ENCODE measurements at regions of chr18 and their contacts with region 1.

Region 1: DNA sequence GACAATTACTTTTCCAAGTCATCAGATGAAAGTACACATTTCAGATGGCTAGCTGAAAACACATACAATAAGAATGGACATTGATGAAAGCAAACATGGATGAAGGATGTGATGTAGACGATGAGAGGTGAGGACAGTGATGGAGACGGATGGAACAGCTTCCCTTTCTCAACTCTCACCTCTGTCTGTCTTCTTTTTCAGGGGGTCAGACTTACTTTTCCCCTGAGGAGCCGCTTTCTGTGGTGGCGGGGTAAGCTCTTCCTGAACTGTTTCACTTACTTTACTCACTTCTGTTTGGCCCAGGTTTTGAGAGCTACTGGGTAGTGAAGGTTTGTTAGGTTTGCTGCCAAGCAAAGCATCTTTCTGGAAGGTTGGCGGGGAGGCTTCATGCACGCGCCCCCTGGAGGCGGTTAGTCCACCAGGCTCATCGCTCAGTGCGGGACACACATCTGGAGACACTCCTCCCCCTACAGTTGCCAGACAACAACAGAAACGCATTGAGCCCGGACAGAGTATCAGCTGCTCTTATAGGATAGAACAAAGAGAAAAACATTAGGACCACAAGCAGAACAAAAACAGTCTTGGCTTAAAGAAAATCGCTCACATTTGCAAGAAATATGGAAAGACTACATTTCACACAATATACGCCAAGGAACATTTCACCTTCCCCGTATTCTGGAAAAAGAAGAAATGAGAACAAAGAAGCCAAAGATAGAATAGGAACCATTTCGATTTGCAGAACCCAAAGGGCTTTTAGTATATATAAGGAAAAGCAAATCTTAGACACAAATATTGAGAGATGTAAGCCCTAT is 90.5 kb downstream of the MYOM1 start:
- H3K4me3 ChIP-seq: no peak overlapping the region
- H3K27ac ChIP-seq: no peak overlapping the region
- H3K4me1 ChIP-seq: no peaks in the 10 kb centered on the region
- CTCF ChIP-seq: peak; percentile 88

Region 2: DNA sequence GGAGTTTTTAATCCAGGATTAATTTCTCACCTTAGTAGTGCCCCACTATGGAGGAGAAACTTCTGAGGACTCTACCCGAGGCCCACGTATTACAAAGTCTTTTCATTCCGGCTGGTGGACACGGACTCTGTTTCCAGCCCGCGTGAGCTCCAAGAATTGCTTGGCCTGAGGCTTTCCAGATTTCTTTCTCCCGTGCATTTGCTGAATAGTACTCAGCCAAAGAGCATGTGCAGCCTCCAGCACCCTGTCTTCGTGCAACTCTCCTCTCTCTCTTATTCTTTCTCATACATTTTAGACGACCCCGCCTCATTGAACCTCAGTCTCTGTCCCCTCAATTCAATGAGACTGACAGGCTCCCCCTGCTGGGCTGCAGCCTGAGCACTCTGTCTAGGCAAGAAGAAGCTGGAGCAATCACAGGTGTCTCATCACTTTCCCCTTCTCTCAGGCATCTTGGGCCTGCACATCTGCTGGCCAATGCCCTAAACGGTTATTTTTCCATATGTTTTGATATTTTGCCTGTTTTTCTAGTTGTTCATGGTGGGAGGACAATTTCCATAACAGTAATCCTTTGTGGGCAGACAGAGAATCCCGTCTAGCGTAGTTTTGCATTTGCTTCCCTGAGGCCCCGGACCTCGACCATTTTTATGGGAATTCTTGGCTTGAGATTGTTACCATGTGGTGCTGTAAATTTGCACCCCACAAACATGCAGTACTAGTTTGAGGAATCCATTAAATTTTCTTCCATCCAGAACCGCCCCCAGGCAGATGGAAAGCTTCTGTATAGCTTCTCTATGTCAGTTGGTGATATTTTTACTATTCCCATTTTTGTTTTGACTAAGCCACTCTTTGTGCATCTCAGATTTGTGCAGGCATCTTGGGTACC is 66.2 kb before region 1 on chr18:
- CTCF ChIA-PET with region 1: interaction called, 18 read pairs
- POLR2A ChIA-PET with region 1: no interaction called
- H3K4me3 ChIP-seq: no peak overlapping the region
- H3K27ac ChIP-seq: no peak overlapping the region
- H3K4me1 ChIP-seq: no peaks in the 10 kb centered on the region
- CTCF ChIP-seq: peak; percentile 61; the same call in 1 of the 2 replicates

Region 3: DNA sequence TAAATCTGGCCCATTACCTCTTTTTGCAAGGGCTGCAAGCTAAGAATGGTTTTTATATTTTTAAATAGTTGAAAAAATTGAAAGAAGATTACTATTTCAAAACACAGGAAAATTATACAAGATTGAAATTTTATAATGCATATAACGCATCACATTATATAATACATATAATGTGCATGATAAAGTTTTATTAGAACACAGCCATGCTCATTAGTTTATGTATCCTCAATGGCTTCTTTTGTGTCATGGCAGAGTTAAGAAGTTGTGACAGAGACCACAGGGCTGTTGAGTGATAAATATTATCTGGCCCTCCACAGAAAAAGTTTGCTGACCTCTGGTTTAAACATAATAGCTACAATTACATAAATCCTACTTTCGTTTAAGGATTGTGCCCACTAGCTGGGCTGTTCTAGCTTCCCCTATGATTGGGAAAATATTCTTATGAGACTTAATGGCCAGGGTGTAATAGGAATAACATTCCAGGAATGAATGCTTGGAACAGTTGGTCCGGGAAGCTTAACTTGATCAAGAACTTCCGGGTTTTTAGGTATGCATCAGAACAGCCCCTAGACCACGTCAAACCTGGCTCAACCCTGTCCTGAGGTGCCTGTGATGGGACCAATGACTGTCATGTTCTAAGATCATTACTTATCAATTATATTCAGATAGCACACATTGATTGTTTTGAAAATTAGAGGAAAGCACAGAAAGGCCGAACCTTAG is 17.6 kb before region 1 on chr18:
- CTCF ChIA-PET with region 1: interaction called, 38 read pairs
- POLR2A ChIA-PET with region 1: no interaction called
- H3K4me3 ChIP-seq: no peak overlapping the region
- H3K27ac ChIP-seq: no peak overlapping the region
- H3K4me1 ChIP-seq: peaks cover 5% of the 10 kb centered on the region; the same call in 1 of the 2 replicates
- CTCF ChIP-seq: no peak

Region 4: DNA sequence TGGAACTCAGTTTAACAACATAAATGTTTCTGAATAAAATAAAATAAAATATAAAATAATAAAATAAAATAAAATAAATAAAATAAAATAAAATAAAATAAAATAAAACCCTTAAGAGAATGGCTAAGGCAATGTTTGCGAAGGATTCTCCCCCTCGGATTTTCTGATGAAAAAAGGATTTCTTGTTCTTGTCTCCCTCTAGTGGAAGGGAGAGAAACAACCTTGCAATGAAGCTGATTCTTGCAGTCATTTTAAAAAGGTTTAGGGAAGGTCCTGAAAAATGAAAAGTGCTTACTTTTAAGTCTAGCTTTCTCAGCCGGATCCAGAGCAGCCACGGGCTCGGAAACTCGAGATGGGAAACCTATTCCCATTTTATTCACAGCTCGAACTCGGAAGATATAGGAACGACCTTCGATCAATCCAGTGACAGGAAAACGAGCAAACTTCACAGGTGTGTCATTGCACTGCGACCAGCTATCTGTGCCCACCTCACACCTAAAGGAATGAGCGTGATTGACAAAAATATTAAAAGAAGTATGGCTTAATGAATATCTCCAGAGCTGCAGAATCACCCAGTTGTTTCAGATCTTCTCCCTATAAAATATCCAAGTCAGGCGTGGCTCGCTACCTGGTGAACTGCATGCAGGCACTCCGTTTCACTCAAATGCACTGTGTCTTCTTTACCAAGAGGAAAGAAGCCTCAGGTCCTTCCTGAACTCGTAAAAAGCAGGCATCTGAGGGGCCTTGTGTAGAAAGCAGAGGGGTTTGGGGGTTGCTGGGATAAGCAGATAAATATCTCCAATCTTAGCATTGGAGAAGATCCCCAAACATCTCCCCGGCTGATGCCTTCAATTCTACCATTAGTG is 22.4 kb after region 1 on chr18:
- CTCF ChIA-PET with region 1: interaction called, 13 read pairs
- POLR2A ChIA-PET with region 1: no interaction called
- H3K4me3 ChIP-seq: no peak overlapping the region
- H3K27ac ChIP-seq: no peak overlapping the region
- H3K4me1 ChIP-seq: 0 out of 2 replicates have a peak, but pooled peaks cover 6% of the 10 kb centered on the region
- CTCF ChIP-seq: no peak

Region 5: GRCh38 chr18:3245853-3246634 is 116.8 kb after region 1 on chr18:
- CTCF ChIA-PET with region 1: interaction called, 31 read pairs
- POLR2A ChIA-PET with region 1: no interaction called
- H3K4me3 ChIP-seq: peak overlapping the region; percentile 34
- H3K27ac ChIP-seq: no peak overlapping the region
- H3K4me1 ChIP-seq: peaks cover 9% of the 10 kb centered on the region
- CTCF ChIP-seq: peak; percentile 95

Region 6: GRCh38 chr18:3281456-3282400 is 152.5 kb after region 1 on chr18:
- CTCF ChIA-PET with region 1: no interaction called
- POLR2A ChIA-PET with region 1: no interaction called
- H3K4me3 ChIP-seq: no peak overlapping the region
- H3K27ac ChIP-seq: no peak overlapping the region
- H3K4me1 ChIP-seq: no peaks in the 10 kb centered on the region
- CTCF ChIP-seq: peak; percentile 36; the same call in 1 of the 2 replicates

Measured in HEK293 (cell line).